Heart right ventricle (tissue), 16 donors: ENCODE measurements at regions of chr1 and their contacts with region 1.

Region 1: GRCh38 chr1:1122078-1122811 is 6.4 kb upstream of the C1orf159 start:
- DNase-seq: peak; percentile 79 to 88
- ATAC-seq: peak; percentile 82 to 96 (median 94)
- H3K4me3 ChIP-seq: peak overlapping the region in 8 of 10 donors; percentile 15 to 45 (median 36)
- H3K27ac ChIP-seq: no peak overlapping the region
- H3K4me1 ChIP-seq: peaks cover 0 to 12% (median 9%) of the 10 kb centered on the region in 9 donors
- H3K27me3 ChIP-seq: peaks cover 0 to 29% (median 13%) of the 10 kb centered on the region in 7 donors
- CTCF ChIP-seq: peak; percentile 84 to 96 (median 91)

Region 2: DNA sequence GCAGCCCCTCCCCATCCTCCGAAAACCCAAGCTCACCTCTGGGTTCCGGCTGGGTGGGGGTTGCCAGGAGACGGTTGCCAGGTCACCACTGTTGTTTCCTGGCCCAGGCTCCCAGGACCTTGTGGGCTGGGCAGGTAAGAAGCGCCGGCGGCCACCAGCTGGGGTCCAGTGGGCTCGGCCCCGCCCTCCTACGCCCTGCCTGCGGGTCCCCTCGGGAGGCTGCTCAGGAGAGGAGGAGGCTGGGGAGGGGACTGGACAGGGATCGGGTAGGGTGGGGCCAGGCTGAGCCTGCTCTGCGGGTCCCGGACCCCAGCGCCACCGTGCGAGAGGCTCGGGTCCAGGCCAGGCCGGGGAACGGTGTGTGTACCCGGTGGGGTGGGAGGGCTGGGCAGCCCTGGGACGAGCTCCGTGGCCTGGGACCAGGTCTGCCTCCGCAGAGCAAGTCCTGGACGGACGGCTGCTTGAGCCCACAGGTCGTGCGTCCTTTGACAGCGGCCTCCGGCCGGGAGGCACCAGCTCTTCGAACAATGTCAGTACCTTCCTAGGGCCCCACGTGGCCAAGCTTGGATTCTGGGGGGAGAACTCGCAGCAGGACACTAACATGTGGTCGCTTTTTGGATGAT is 51.7 kb after region 1 on chr1 and contains the start of gene TTLL10:
- intact Hi-C with region 1: loop called in 1 of 10 experiments (anchors 5 kb)
- DNase-seq: peak in 1 of 2 donors; percentile 15
- ATAC-seq: peak in 3 of 8 donors; percentile 22 to 36 (median 35)
- H3K4me3 ChIP-seq: no peak within 1 kb of the TSS
- H3K27ac ChIP-seq: no peak within 1 kb of the TSS
- H3K4me1 ChIP-seq: peaks cover 0 to 10% (median 4%) of the 10 kb centered on the region in 9 donors
- H3K27me3 ChIP-seq: peaks cover 13 to 96% (median 87%) of the 10 kb centered on the region in 7 donors
- CTCF ChIP-seq: no peak
- total RNA-seq, gene TTLL10: 0.11 to 0.53 (median 0.26) TPM in 7 of 10 donors, not detected in the others

Region 3: GRCh38 chr1:1231400-1232223 is 109.4 kb after region 1 on chr1 and contains the start of gene SDF4:
- intact Hi-C with region 1: loop called in 3 of 10 experiments (anchors 2 to 5 kb)
- DNase-seq: peak; percentile 97
- ATAC-seq: peak; percentile 96 to 99 (median 98)
- H3K4me3 ChIP-seq: peak within 1 kb of the TSS; percentile 73 to 100 (median 96)
- H3K27ac ChIP-seq: peak within 1 kb of the TSS; percentile 92 to 99 (median 96)
- H3K4me1 ChIP-seq: peaks cover 11 to 48% (median 30%) of the 10 kb centered on the region in 9 donors
- H3K27me3 ChIP-seq: no peaks in the 10 kb centered on the region
- CTCF ChIP-seq: no peak
- total RNA-seq, gene SDF4: 95.6 to 174 (median 123) TPM

Region 4: DNA sequence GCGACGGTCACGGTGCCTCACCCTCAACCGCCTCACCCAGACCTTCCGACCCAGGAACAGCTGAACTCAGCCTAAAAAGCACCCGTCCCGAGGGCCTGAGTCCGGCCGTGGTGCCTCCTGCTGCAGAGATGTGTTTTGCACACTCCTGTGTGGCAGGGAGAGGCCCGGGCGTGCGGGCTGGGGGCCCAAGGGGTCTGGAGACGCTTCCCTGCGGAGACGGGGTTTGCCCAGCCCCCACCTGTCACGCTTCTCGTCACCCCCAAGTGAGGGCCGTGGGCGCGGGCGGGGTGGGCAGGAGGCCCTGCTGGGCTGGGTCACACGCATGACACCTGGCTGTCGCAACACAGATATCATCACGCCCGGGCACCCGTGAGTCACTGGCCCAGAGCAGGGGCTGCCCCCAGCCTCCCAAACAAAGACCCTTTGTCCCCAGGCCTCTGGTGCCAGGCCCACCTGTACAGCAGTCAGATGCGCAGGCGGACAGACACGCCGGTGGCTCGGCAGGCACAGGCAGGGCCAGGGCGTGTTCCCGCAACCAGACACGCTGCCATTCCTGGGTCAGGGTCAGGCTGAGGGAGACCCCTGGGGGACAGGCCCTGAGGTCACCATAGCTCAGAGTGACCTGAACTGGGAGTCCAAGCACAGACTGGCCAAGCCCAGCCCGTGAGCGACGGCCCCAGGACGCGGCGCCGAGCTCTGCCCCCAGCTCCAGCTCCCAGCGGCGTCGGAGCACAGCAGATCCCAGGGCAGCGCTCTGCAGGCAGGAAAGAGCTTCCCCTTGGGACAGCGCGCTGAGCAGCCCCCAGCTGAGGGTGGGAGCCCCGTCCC is 115.8 kb after region 1 on chr1:
- intact Hi-C with region 1: loop called in 4 of 10 experiments (anchors 5 to 10 kb)
- DNase-seq: no peak
- ATAC-seq: no peak
- H3K4me3 ChIP-seq: no peak overlapping the region
- H3K27ac ChIP-seq: no peak overlapping the region
- H3K4me1 ChIP-seq: peaks cover 4 to 34% (median 14%) of the 10 kb centered on the region in 9 donors
- H3K27me3 ChIP-seq: peaks cover 6 to 44% (median 38%) of the 10 kb centered on the region in 7 donors
- CTCF ChIP-seq: no peak

Region 5: GRCh38 chr1:1250786-1251284 is 128.6 kb after region 1 on chr1:
- intact Hi-C with region 1: loop called in 8 of 10 experiments (anchors 2 to 10 kb)
- DNase-seq: no peak
- ATAC-seq: peak in 2 of 8 donors; percentile 20 to 21
- H3K4me3 ChIP-seq: no peak overlapping the region
- H3K27ac ChIP-seq: no peak overlapping the region
- H3K4me1 ChIP-seq: peaks cover 0 to 5% (median 0%) of the 10 kb centered on the region in 9 donors
- H3K27me3 ChIP-seq: peaks cover 7 to 24% (median 20%) of the 10 kb centered on the region in 7 donors
- CTCF ChIP-seq: no peak

Region 6: GRCh38 chr1:1291548-1292441 is 169.6 kb after region 1 on chr1:
- intact Hi-C with region 1: loop called in 9 of 10 experiments (anchors 1 to 10 kb)
- DNase-seq: peak; percentile 56 to 64
- ATAC-seq: peak; percentile 54 to 83 (median 68)
- H3K4me3 ChIP-seq: no peak overlapping the region
- H3K27ac ChIP-seq: no peak overlapping the region
- H3K4me1 ChIP-seq: peaks cover 0 to 13% (median 7%) of the 10 kb centered on the region in 9 donors
- H3K27me3 ChIP-seq: peaks cover 0 to 12% (median 8%) of the 10 kb centered on the region in 7 donors
- CTCF ChIP-seq: peak; percentile 33 to 73 (median 65)